Naive thymus-derived CD4-positive, alpha-beta T cell (primary cell): ENCODE measurements at regions of chr6 and their contacts with region 1.

Region 1: GRCh38 chr6:2749969-2750600 is 637 bp downstream of the MYLK4 start:
- DNase-seq: peak; percentile 32 to 71 (median 63)
- ATAC-seq: peak; percentile 86
- H3K4me3 ChIP-seq: no peak overlapping the region
- H3K4me3 Mint-ChIP-seq: no peak overlapping the region
- H3K27ac ChIP-seq: no peak overlapping the region
- H3K27ac Mint-ChIP-seq: no peak overlapping the region
- H3K4me1 ChIP-seq: no peaks in the 10 kb centered on the region
- H3K4me1 Mint-ChIP-seq: peaks cover 0 to 9% (median 3%) of the 10 kb centered on the region in 7 donors
- H3K27me3 ChIP-seq: no peaks in the 10 kb centered on the region
- H3K27me3 Mint-ChIP-seq: peaks cover 13 to 69% (median 19%) of the 10 kb centered on the region in 5 donors

Region 2: DNA sequence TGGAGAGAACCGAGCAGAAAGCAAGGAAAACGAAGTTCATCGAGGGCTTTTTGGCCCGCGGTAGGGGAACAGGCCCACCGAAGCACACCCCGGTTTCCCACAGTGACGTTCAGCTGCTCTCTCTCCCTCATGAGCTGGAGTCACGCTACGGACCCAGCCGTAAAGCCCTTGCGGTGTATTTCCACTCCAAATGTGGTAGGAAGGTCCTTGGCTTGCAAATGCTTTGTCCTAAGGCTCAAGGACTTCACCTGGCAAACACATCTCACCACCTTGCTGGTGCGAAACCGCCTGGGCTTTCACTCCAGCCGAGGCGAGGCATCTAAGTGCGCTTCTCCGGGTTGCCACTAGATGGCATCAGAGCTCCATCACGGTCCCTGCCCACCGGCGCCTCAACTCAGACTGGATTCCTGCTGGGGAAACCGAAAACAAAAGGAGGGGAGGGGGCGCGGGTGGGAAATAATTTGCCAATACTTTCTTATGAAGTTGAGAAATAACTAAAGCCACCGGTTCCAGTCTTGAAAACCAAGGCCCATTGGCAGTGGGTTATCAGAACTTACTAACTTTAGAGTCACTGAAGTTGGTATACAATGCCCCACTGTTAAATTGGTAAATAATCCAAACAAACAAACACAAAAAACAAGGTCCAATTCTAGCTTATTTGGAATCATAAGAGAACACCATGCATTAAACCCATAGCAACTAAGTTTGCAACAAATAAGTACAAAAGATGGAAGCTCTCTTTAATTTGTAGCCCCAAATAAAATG is 1153.8 kb before region 1 on chr6:
- CTCF ChIA-PET with region 1: interaction called, 11 read pairs
- POLR2A ChIA-PET with region 1: no interaction called
- intact Hi-C with region 1: loop called (anchors 1 to 2 kb)
- DNase-seq: peak in 8 of 9 donors; percentile 45 to 76 (median 63)
- ATAC-seq: peak; percentile 90
- H3K4me3 ChIP-seq: no peak overlapping the region
- H3K4me3 Mint-ChIP-seq: peak overlapping the region in 6 of 10 donors; percentile 7 to 42 (median 30)
- H3K27ac ChIP-seq: no peak overlapping the region
- H3K27ac Mint-ChIP-seq: peak overlapping the region in 1 of 9 donors; percentile 28
- H3K4me1 ChIP-seq: peaks cover 0 to 4% of the 10 kb centered on the region in 2 donors
- H3K4me1 Mint-ChIP-seq: peaks cover 4 to 9% (median 7%) of the 10 kb centered on the region in 7 donors
- H3K27me3 ChIP-seq: peaks cover 0 to 4% of the 10 kb centered on the region in 2 donors
- H3K27me3 Mint-ChIP-seq: peaks cover 59 to 68% (median 60%) of the 10 kb centered on the region in 5 donors